HCT116 (cell line): ENCODE measurements at regions of chr1 and their contacts with region 1.

Region 1: GRCh38 chr1:165073185-165074007 is 283.1 kb downstream of the LMX1A start:
- DNase-seq: peak; percentile 51
- ATAC-seq: peak; percentile 86
- H3K4me3 ChIP-seq: no peak overlapping the region
- H3K27ac ChIP-seq: no peak overlapping the region
- H3K4me1 ChIP-seq: no peaks in the 10 kb centered on the region
- H3K27me3 ChIP-seq: no peaks in the 10 kb centered on the region
- CTCF ChIP-seq: peak; percentile 51 to 69 (median 66); a peak in 5 of 6 replicates
- POLR2A ChIP-seq: no peak
- RAD21 ChIP-seq: peak; percentile 77

Region 2: GRCh38 chr1:163410073-163410999 is 1663.1 kb before region 1 on chr1:
- CTCF ChIA-PET with region 1: no interaction called
- POLR2A ChIA-PET with region 1: no interaction called
- RAD21 ChIA-PET with region 1: no interaction called
- intact Hi-C with region 1: loop called (anchors 1 kb)
- DNase-seq: peak; percentile 48
- ATAC-seq: peak; percentile 34
- H3K4me3 ChIP-seq: no peak overlapping the region
- H3K27ac ChIP-seq: no peak overlapping the region
- H3K4me1 ChIP-seq: no peaks in the 10 kb centered on the region
- H3K27me3 ChIP-seq: peaks cover 4% of the 10 kb centered on the region; the same call in 1 of the 2 replicates
- CTCF ChIP-seq: peak; percentile 49 to 89 (median 73); a peak in 5 of 6 replicates
- POLR2A ChIP-seq: no peak
- RAD21 ChIP-seq: peak; percentile 78

Region 3: DNA sequence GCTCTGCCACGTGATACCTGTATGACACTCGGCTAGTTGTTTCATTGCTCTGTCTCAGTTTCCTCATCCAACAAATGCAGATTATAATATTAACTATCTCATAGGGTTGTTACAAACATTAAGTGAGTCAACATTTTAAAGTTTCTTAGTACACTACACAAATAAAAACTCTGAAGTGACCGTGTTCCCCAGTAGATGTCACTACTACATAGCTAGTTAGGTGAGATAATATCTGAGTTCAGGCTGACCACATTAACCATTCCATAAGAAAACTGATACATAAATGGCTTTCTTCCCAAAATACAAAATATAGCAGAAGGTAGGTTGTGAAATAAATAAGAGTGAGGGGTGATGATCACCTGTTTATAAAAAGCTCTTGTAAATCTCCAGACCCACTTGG is 1537.6 kb before region 1 on chr1:
- CTCF ChIA-PET with region 1: interaction called, 7 read pairs
- POLR2A ChIA-PET with region 1: no interaction called
- RAD21 ChIA-PET with region 1: no interaction called
- intact Hi-C with region 1: loop called (anchors 1 kb)
- DNase-seq: peak; percentile 10
- ATAC-seq: peak; percentile 70
- H3K4me3 ChIP-seq: no peak overlapping the region
- H3K27ac ChIP-seq: no peak overlapping the region
- H3K4me1 ChIP-seq: no peaks in the 10 kb centered on the region
- H3K27me3 ChIP-seq: no peaks in the 10 kb centered on the region
- CTCF ChIP-seq: peak; percentile 19 to 56 (median 31); a peak in 4 of 6 replicates
- POLR2A ChIP-seq: no peak
- RAD21 ChIP-seq: peak; percentile 64

Region 4: GRCh38 chr1:164617377-164618201 is 455.8 kb before region 1 on chr1:
- CTCF ChIA-PET with region 1: interaction called, 5 read pairs
- POLR2A ChIA-PET with region 1: no interaction called
- RAD21 ChIA-PET with region 1: no interaction called
- intact Hi-C with region 1: loop called (anchors 5 kb)
- DNase-seq: peak; percentile 19
- ATAC-seq: peak; percentile 75
- H3K4me3 ChIP-seq: no peak overlapping the region
- H3K27ac ChIP-seq: no peak overlapping the region
- H3K4me1 ChIP-seq: peaks cover 24 to 30% of the 10 kb centered on the region in 2 experiments
- H3K27me3 ChIP-seq: no peaks in the 10 kb centered on the region
- CTCF ChIP-seq: peak; percentile 69 to 82 (median 72); a peak in 5 of 6 replicates
- POLR2A ChIP-seq: no peak
- RAD21 ChIP-seq: peak; percentile 92

Region 5: GRCh38 chr1:164786980-164787833 is 286.2 kb before region 1 on chr1:
- CTCF ChIA-PET with region 1: interaction called, 4 read pairs
- POLR2A ChIA-PET with region 1: no interaction called
- RAD21 ChIA-PET with region 1: no interaction called
- intact Hi-C with region 1: loop called (anchors 1 kb)
- DNase-seq: peak; percentile 65
- ATAC-seq: peak; percentile 98
- H3K4me3 ChIP-seq: no peak overlapping the region
- H3K27ac ChIP-seq: 0 out of 2 replicates have a peak overlapping the region, but pooled peaks have one; percentile 19
- H3K4me1 ChIP-seq: peaks cover 17 to 20% of the 10 kb centered on the region in 2 experiments; a peak in 3 of 4 replicates
- H3K27me3 ChIP-seq: no peaks in the 10 kb centered on the region
- CTCF ChIP-seq: peak; percentile 68 to 97 (median 90); a peak in 5 of 6 replicates
- POLR2A ChIP-seq: no peak
- RAD21 ChIP-seq: peak; percentile 98

Region 6: DNA sequence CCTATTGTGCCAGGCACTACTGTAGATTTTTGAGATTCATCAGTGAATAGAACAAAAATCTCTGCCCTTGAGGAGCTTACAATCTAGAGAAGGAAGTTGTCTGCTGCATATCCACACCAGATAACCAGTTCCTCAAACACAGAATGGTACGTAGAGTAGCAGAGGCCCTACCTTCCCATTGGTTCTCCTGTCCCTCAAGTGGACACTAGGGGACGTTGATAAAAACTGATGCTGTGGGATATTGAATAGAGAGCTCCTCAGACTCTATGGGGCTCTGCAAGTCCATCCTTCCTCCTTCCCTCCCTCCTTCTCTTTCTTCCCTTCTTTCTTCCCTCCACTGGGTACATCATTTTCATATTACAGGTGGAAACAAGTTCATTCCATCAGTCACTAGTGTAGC is 143.2 kb before region 1 on chr1:
- CTCF ChIA-PET with region 1: no interaction called
- POLR2A ChIA-PET with region 1: no interaction called
- RAD21 ChIA-PET with region 1: no interaction called
- intact Hi-C with region 1: loop called (anchors 5 kb)
- DNase-seq: no peak
- ATAC-seq: peak; percentile 73
- H3K4me3 ChIP-seq: no peak overlapping the region
- H3K27ac ChIP-seq: no peak overlapping the region
- H3K4me1 ChIP-seq: no peaks in the 10 kb centered on the region
- H3K27me3 ChIP-seq: no peaks in the 10 kb centered on the region
- CTCF ChIP-seq: peak in 2 of 3 experiments; percentile 24 to 33; a peak in 3 of 6 replicates
- POLR2A ChIP-seq: no peak
- RAD21 ChIP-seq: no peak